ENCODE measurements at regions of chr3 and their contacts with region 1.

Region 1: DNA sequence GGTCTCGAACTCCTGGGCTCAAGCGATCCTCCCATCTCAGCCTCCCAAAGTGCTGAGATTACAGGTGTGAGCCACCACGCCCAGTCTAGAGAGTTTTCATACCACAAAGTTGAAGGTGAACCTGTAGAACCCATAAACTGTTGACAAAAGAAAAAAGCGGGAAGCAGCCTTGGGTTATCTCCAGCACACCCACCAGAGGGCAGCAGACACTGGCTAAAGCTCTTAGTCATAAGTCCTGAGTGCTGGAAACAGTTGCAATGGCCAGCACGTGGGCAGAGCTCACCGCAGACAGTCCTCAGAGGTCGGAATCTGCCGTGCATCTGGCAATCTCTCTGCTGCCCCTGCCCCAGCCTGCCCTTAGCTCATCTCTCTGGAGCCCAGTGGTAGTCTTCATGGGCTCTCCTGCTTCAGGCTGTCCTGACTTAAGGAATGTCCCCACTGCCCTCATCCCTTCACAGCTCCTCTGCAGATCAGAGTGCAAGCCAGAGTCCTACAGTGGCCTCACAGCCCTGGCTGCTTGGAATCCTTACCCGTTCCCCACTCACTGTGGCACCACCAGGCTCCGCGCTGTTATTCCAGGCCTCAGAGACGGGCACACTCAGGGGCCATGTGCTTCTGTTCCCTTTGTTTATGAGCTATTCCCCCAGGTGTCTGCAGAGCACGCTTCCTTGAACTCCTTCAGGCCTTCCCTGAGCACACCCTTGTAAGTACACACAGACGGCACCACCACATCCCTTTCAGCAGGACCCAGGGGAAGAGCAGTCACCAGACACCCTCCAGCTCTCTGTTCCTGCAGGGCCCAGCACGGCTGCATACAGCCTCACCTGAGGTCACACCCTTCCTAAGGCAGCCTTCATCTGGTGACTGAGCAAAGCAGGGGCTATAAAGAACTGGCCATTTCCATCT is 8.8 kb upstream of the ELP6 start:
- DNase-seq: peak; percentile 72 to 93 (median 81)
- ATAC-seq: peak; percentile 97
- H3K4me3 ChIP-seq: no peak overlapping the region
- H3K27ac ChIP-seq: peak overlapping the region; percentile 18; the same call in 1 of the 3 replicates
- H3K4me1 ChIP-seq: peaks cover 9 to 11% of the 10 kb centered on the region in 2 experiments; a peak in 4 of 5 replicates
- H3K27me3 ChIP-seq: no peaks in the 10 kb centered on the region
- CTCF ChIP-seq: peak; percentile 89 to 98 (median 92)
- EP300 ChIP-seq: peak; percentile 52
- POLR2A ChIP-seq: no peak
- RAD21 ChIP-seq: peak; percentile 98 to 100

Region 2: DNA sequence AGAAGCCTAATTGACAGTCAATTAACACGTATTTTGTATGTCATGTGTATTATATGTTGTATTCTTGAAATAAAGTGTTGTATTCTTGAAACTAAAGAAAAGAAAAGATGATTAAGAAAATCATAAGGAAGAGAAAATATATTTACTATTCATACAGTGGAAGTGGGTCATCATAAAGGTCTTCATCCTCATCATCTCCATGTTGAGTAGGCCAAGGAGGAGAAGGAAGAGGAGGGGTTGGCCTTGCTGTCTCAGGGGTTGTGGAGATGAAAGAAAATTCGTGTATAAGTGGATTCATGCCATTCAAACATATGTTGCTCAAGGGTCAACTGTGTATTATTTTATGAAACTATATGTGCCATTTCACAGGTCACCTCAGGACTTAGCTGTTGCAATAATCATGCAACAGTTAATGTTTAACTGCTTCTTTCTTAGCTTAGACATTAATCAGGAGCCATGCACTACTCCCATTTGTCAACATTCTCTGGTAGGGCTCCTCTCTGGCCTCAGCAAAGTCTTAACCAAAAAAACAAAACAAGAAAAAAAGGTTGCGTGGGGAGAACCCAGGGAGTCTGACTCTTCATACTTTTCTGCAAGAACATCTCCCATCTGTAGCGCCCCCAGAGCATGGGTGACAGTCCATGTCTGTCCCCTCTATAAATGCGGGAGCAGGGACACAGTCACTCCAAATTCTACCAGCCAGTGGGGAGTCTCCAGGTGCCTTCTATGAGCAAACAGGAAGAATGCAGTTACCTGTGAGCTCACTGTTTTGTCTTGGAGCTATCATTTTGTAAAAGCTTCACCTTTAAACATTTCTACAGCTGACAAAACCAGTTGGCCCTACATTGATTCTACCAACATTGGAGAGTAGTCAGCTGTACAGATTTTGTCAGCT is 936.3 kb before region 1 on chr3:
- CTCF ChIA-PET with region 1: no interaction called
- POLR2A ChIA-PET with region 1: no interaction called
- in situ Hi-C with region 1: no loop called
- intact Hi-C with region 1: no loop called
- DNase-seq: no peak
- ATAC-seq: peak; percentile 36; the same call in 2 of the 3 replicates
- H3K4me3 ChIP-seq: no peak overlapping the region
- H3K27ac ChIP-seq: no peak overlapping the region
- H3K4me1 ChIP-seq: no peaks in the 10 kb centered on the region; a peak in 1 of 5 replicates
- H3K27me3 ChIP-seq: peaks cover 10 to 21% of the 10 kb centered on the region in 2 experiments
- CTCF ChIP-seq: no peak
- EP300 ChIP-seq: peak; percentile 64; the same call in 1 of the 2 replicates
- POLR2A ChIP-seq: no peak
- RAD21 ChIP-seq: no peak

Region 3: GRCh38 chr3:47578119-47578632 is 55.8 kb after region 1 on chr3:
- CTCF ChIA-PET with region 1: no interaction called
- POLR2A ChIA-PET with region 1: interaction called, 5 read pairs
- in situ Hi-C with region 1: no loop called
- intact Hi-C with region 1: loop called (anchors 10 kb)
- DNase-seq: peak; percentile 70 to 99 (median 94)
- ATAC-seq: peak; percentile 87
- H3K4me3 ChIP-seq: peak overlapping the region; percentile 65
- H3K27ac ChIP-seq: no peak overlapping the region
- H3K4me1 ChIP-seq: peaks cover 3 to 28% of the 10 kb centered on the region in 2 experiments; a peak in 3 of 5 replicates
- H3K27me3 ChIP-seq: peaks cover 0 to 5% of the 10 kb centered on the region in 2 experiments; a peak in 2 of 5 replicates
- CTCF ChIP-seq: no peak
- EP300 ChIP-seq: no peak
- POLR2A ChIP-seq: no peak
- RAD21 ChIP-seq: no peak

Region 4: GRCh38 chr3:47664519-47664918 is 142.2 kb after region 1 on chr3:
- CTCF ChIA-PET with region 1: interaction called, 6 read pairs
- POLR2A ChIA-PET with region 1: no interaction called
- in situ Hi-C with region 1: no loop called
- intact Hi-C with region 1: loop called (anchors 1 kb)
- DNase-seq: peak in 2 of 4 experiments; percentile 34 to 35
- ATAC-seq: peak; percentile 85
- H3K4me3 ChIP-seq: no peak overlapping the region
- H3K27ac ChIP-seq: no peak overlapping the region
- H3K4me1 ChIP-seq: no peaks in the 10 kb centered on the region; a peak in 1 of 5 replicates
- H3K27me3 ChIP-seq: no peaks in the 10 kb centered on the region
- CTCF ChIP-seq: peak; percentile 30 to 53 (median 33); a peak in 4 of 6 replicates
- EP300 ChIP-seq: no peak
- POLR2A ChIP-seq: no peak
- RAD21 ChIP-seq: no peak; a peak in 1 of 4 replicates

Region 5: GRCh38 chr3:47791193-47791855 is 269.0 kb after region 1 on chr3:
- CTCF ChIA-PET with region 1: interaction called, 39 read pairs
- POLR2A ChIA-PET with region 1: interaction called, 5 read pairs
- in situ Hi-C with region 1: loop called (anchors 5 kb)
- intact Hi-C with region 1: loop called (anchors 1 kb)
- DNase-seq: no peak
- ATAC-seq: no peak
- H3K4me3 ChIP-seq: no peak overlapping the region
- H3K27ac ChIP-seq: no peak overlapping the region
- H3K4me1 ChIP-seq: peaks cover 0 to 6% of the 10 kb centered on the region in 2 experiments; a peak in 2 of 5 replicates
- H3K27me3 ChIP-seq: no peaks in the 10 kb centered on the region
- CTCF ChIP-seq: no peak
- EP300 ChIP-seq: no peak
- POLR2A ChIP-seq: no peak
- RAD21 ChIP-seq: no peak